Mucosa of descending colon (tissue), 3 donors: ENCODE measurements at regions of chr14 and their contacts with region 1.

Region 1: GRCh38 chr14:59262717-59263454 is 74.4 kb downstream of the DAAM1 start:
- DNase-seq: peak; percentile 52 to 62 (median 53)
- ATAC-seq: peak; percentile 97
- H3K4me3 ChIP-seq: no peak overlapping the region
- H3K4me1 ChIP-seq: no peaks in the 10 kb centered on the region
- CTCF ChIP-seq: peak; percentile 50

Region 2: DNA sequence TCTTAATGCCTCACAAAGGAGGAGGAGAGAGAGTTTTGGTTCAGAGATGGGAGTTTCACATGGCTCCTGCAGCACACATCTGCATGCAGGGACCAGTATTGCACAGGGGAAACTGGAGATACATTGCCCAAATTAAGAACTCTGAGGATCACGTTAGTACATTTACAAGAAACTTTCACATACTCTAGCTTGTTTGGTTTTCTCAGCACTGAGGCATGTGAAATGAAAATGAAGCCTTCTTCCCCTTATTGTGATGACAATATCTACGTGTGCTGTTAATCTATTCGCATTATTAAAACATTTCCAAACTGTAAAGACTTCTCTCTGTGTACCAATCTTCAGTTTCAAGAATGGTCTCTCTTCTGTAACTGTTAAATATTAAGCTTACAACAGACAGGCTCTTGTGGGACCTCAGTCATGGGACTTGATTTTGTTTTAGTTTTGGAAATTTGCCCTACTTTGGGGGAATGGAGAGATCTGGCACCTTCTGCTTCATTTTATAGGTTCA is 50.3 kb after region 1 on chr14:
- intact Hi-C with region 1: loop called in 1 of 2 experiments (anchors 10 kb)
- DNase-seq: no peak
- ATAC-seq: no peak
- H3K4me3 ChIP-seq: no peak overlapping the region
- H3K4me1 ChIP-seq: no peaks in the 10 kb centered on the region
- CTCF ChIP-seq: no peak